Activated CD4-positive, alpha-beta T cell treated with anti-CD3 and anti-CD28 coated beads, Interleukin-2, amount 10 ng/mL, durations not matched to agents 24 days and 14 days (primary cell): ENCODE measurements at regions of chr12 and their contacts with region 1.

Region 1: DNA sequence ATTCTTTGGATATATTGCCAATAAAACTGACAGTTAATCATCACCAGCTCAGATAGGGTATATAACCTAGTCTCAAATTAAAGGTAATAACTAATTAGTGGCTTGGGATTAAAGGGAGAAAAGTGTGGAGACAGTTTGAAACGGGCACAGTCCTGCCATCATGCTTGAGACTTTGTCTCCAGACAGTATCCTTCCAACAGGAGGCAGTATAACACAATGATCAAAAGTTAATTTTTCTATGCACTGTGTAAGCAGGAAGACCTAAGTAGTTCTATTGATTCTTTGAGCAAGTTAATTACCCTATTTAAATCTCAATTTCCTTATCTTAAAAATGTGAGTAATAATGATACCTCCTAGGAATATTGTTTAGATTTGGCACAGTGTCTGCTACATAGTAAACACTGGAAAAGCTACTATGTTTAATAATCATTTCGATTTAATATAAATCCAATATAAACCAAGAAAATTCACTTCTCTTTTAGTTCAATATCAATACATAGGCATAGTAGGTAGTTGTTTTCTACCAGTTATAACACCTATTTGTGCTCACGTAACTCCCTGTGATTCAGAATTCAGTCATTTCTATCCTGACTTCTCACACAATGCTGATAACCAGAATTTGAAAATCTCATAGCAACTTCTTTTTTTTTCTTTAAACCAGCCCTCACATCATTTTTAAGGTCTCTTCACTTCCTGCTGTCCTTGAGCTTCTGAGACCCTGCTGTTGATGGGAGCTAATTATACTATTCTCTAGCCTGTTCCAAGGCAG is 53.7 kb downstream of the GALNT4 start:
- DNase-seq: peak; percentile 73
- H3K4me3 Mint-ChIP-seq: no peak overlapping the region
- H3K27ac Mint-ChIP-seq: peak overlapping the region; percentile 22
- H3K4me1 Mint-ChIP-seq: peaks cover 60% of the 10 kb centered on the region
- H3K27me3 Mint-ChIP-seq: no peaks in the 10 kb centered on the region

Region 2: GRCh38 chr12:89019408-89020120 is 451.4 kb before region 1 on chr12:
- intact Hi-C with region 1: loop called (anchors 1 kb)
- DNase-seq: peak; percentile 94
- H3K4me3 Mint-ChIP-seq: no peak overlapping the region
- H3K27ac Mint-ChIP-seq: no peak overlapping the region
- H3K4me1 Mint-ChIP-seq: peaks cover 18% of the 10 kb centered on the region
- H3K27me3 Mint-ChIP-seq: peaks cover 5% of the 10 kb centered on the region

Region 3: DNA sequence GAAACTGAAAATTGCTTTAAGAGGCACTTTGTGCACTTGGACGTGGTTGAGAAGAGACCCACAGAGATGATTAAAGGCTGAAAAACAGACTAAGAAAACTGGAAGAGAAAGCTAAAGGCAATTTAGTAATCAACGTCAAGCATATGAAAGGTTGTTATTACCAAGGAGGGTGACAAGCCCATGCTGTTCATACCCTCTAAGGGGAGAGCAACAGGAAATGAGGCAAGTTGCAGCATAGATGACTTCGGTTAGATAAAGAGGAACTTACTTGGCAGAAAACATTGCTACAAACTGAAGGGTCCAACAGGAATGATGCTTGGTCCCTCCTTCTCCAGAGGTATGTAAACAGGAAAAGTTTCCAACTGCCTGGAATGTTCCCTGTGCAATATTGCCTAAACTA is 226.4 kb before region 1 on chr12:
- intact Hi-C with region 1: loop called (anchors 5 kb)
- DNase-seq: peak; percentile 82
- H3K4me3 Mint-ChIP-seq: peak overlapping the region; percentile 52
- H3K27ac Mint-ChIP-seq: peak overlapping the region; percentile 84
- H3K4me1 Mint-ChIP-seq: peaks cover 45% of the 10 kb centered on the region
- H3K27me3 Mint-ChIP-seq: no peaks in the 10 kb centered on the region

Region 4: GRCh38 chr12:89494411-89495231 is 23.7 kb after region 1 on chr12:
- intact Hi-C with region 1: loop called (anchors 1 kb)
- DNase-seq: peak; percentile 72
- H3K4me3 Mint-ChIP-seq: peak overlapping the region; percentile 44
- H3K27ac Mint-ChIP-seq: peak overlapping the region; percentile 96
- H3K4me1 Mint-ChIP-seq: peaks cover 14% of the 10 kb centered on the region
- H3K27me3 Mint-ChIP-seq: no peaks in the 10 kb centered on the region

Region 5: DNA sequence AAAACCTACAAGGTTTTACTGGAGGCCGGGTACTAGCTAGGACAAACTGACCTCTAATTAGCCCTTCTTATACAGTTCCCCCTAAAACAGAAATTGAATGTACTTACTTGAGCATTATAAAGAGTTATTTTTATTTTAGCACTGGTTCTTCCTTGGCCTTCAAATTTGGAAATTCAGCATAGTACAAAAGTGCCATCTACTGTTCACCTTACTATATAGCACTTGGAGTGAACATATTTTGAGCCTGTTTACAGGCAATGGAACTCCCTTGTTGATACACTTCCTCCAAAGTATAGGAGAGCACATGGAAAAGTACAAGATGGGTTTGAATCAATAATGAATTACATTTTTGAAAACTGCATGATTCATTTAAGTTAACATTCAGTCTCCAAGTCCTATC is 58.8 kb after region 1 on chr12:
- intact Hi-C with region 1: loop called (anchors 1 kb)
- DNase-seq: peak; percentile 74
- H3K4me3 Mint-ChIP-seq: no peak overlapping the region
- H3K27ac Mint-ChIP-seq: no peak overlapping the region
- H3K4me1 Mint-ChIP-seq: peaks cover 24% of the 10 kb centered on the region
- H3K27me3 Mint-ChIP-seq: no peaks in the 10 kb centered on the region